ENCODE measurements at regions of chr1 and their contacts with region 1.

Region 1: GRCh38 chr1:224454397-224455066 is 19.9 kb upstream of the WDR26 start:
- DNase-seq: no peak
- CTCF ChIP-seq: no peak

Region 2: DNA sequence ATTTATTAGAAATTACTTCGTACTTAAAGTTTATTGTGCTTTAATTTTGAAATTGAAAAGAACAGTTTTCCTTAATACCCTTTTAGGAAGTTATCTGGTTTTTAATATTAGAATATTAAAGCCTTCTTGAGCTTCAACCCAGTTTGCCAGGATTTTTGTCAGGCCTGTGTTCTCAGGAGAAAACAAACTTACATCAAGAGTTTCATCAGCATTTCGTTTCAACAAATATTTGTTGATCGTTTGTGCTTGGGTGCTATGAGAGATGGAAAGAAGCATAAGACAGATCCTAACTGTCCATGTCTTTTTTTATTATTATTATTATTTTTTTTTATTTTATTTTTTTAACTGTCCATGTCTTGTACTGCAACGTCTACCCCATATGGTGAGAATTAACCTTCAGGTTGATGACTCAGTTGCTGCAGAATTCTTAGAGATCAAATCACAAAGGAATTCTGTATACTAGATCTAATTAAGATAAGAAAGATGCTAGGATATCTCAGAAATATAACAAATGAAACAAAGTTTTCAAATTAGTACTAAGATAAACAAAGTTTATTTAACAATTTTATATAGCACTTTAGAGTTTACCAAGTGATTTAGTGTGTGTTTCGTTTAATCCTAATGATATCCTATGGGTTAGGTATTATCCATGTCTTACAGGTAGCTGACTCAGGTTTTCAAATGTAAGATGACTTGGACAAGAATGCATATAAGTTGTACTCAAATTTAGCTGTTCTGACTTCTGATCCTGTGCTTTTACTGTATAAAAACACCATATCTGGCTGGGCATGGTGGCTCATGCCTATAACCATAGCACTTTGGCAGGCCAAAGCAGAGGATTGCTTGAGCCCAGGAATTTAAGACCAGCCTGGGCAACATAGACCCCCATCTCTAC is 326.4 kb before region 1 on chr1:
- in situ Hi-C with region 1: loop called (anchors 25 kb)
- DNase-seq: no peak
- CTCF ChIP-seq: no peak

Measured in GM13977 (cell line).